ENCODE measurements at regions of chr1 and their contacts with region 1.

Region 1: DNA sequence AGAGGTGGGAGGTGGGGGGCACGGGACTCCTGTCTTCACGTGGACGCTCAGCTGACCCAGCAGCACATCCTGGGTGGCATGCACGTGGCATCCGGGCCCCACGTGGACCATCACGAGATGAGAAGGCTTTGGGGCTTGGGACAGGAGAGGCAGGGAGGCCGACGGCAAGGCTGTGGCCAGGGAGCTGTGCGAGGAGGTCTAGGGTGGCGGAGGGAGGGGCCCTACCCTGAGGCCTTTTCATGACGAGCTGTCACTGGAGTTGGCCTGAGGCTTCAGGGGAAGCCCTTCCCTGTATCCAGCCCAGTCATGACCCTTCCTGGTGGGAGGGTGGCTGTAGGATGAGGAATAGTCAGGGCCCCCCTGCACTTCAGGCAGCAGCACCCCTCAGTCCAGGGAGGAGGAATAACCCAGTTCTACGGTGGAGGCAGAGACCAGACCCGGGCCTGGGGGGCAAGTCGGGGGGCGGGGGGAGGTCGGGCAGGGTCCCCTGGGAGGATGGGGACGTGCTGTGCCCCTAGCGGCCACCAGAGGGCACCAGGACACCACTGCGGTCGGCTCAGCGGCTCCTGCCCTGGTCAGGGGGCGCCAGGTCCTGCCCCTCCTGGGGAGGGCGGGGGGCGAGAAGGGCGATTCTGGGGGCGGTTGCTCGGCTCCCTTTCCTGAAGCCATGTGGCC is 2.0 kb upstream of the PERM1 start:
- DNase-seq: peak; percentile 43 to 79 (median 56)
- ATAC-seq: peak; percentile 84
- H3K4me3 ChIP-seq: no peak overlapping the region
- H3K4me3 Mint-ChIP-seq: no peak overlapping the region
- H3K27ac ChIP-seq: no peak overlapping the region
- H3K27ac Mint-ChIP-seq: no peak overlapping the region
- H3K4me1 ChIP-seq: peaks cover 3% of the 10 kb centered on the region
- H3K4me1 Mint-ChIP-seq: no peaks in the 10 kb centered on the region
- H3K27me3 ChIP-seq: peaks cover 0 to 14% of the 10 kb centered on the region in 2 experiments
- H3K27me3 Mint-ChIP-seq: peaks cover 19% of the 10 kb centered on the region
- CTCF ChIP-seq: peak; percentile 93

Region 2: GRCh38 chr1:1001461-1002204 is 17.7 kb after region 1 on chr1:
- CTCF ChIA-PET with region 1: interaction called, 14 read pairs
- POLR2A ChIA-PET with region 1: no interaction called
- intact Hi-C with region 1: no loop called
- DNase-seq: peak in 13 of 14 experiments; percentile 44 to 80 (median 62)
- ATAC-seq: no peak
- H3K4me3 ChIP-seq: peak overlapping the region; percentile 37
- H3K4me3 Mint-ChIP-seq: peak overlapping the region; percentile 87
- H3K27ac ChIP-seq: no peak overlapping the region
- H3K27ac Mint-ChIP-seq: peak overlapping the region; percentile 94
- H3K4me1 ChIP-seq: peaks cover 49% of the 10 kb centered on the region
- H3K4me1 Mint-ChIP-seq: peaks cover 17% of the 10 kb centered on the region
- H3K27me3 ChIP-seq: peaks cover 65 to 78% of the 10 kb centered on the region in 2 experiments
- H3K27me3 Mint-ChIP-seq: peaks cover 57% of the 10 kb centered on the region
- CTCF ChIP-seq: peak; percentile 92

Region 3: GRCh38 chr1:1059494-1060280 is 75.8 kb after region 1 on chr1:
- CTCF ChIA-PET with region 1: interaction called, 6 read pairs
- POLR2A ChIA-PET with region 1: no interaction called
- intact Hi-C with region 1: loop called (anchors 1 kb)
- DNase-seq: peak; percentile 78 to 94 (median 88)
- ATAC-seq: peak; percentile 76
- H3K4me3 ChIP-seq: peak overlapping the region; percentile 24
- H3K4me3 Mint-ChIP-seq: no peak overlapping the region
- H3K27ac ChIP-seq: no peak overlapping the region
- H3K27ac Mint-ChIP-seq: no peak overlapping the region
- H3K4me1 ChIP-seq: peaks cover 41% of the 10 kb centered on the region
- H3K4me1 Mint-ChIP-seq: peaks cover 4% of the 10 kb centered on the region
- H3K27me3 ChIP-seq: peaks cover 44 to 52% of the 10 kb centered on the region in 2 experiments
- H3K27me3 Mint-ChIP-seq: peaks cover 40% of the 10 kb centered on the region
- CTCF ChIP-seq: no peak

Region 4: GRCh38 chr1:1291548-1292441 is 307.9 kb after region 1 on chr1:
- CTCF ChIA-PET with region 1: interaction called, 4 read pairs
- POLR2A ChIA-PET with region 1: no interaction called
- intact Hi-C with region 1: loop called in 1 of 2 experiments (anchors 5 kb)
- DNase-seq: peak; percentile 43 to 84 (median 61)
- ATAC-seq: peak; percentile 81
- H3K4me3 ChIP-seq: no peak overlapping the region
- H3K4me3 Mint-ChIP-seq: no peak overlapping the region
- H3K27ac ChIP-seq: no peak overlapping the region
- H3K27ac Mint-ChIP-seq: no peak overlapping the region
- H3K4me1 ChIP-seq: peaks cover 14% of the 10 kb centered on the region
- H3K4me1 Mint-ChIP-seq: no peaks in the 10 kb centered on the region
- H3K27me3 ChIP-seq: no peaks in the 10 kb centered on the region
- H3K27me3 Mint-ChIP-seq: no peaks in the 10 kb centered on the region
- CTCF ChIP-seq: peak; percentile 42

Measured in CD4-positive, alpha-beta T cell (primary cell).